HEK293 (cell line): ENCODE measurements at regions of chr4 and their contacts with region 1.

Region 1: DNA sequence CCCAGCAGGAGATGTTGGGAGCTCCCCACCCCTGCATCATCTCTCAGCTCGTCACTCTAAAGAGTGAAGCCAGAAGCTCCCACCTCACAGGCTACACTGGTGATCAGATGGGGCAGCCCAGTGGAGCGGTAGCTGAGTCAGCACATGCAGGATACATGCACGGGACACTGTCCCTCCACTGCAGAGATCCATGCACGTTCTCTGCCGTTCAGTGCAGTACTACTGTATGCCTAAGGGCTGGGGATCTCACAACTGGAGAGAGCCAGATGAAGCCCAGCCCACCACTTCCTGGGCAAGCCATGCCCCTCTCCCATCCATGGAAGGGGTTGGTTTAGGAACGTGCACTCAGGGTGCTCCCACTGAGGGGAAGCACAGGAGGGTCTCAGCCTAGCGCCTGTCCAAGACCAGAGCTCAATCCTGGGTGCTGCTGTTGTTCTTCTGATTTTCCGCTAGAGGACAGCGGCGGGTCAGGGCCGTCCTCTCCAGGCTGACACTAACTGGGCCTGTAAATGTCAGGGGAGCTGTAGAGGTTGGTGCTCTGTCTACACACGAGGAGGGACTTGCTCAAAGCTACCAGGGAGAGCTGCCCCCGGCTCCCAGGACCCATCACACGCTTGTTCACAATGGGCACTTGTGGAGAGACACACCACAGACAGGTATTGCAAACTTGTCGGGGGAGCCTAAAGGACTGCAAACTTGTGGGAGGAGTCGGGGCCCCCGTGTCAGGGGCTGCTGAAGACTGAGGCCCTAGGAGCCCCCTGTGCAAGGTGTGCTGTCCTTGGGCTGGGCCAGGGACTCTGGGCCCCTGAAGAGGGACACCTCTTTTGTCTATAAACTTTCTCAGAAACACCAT is 18.2 kb upstream of the ABLIM2 start:
- H3K4me3 ChIP-seq: no peak overlapping the region
- H3K27ac ChIP-seq: no peak overlapping the region
- H3K4me1 ChIP-seq: no peaks in the 10 kb centered on the region
- CTCF ChIP-seq: peak; percentile 59; the same call in 1 of the 2 replicates

Region 2: GRCh38 chr4:8000721-8001491 is 175.9 kb before region 1 on chr4:
- CTCF ChIA-PET with region 1: no interaction called
- POLR2A ChIA-PET with region 1: no interaction called
- H3K4me3 ChIP-seq: no peak overlapping the region
- H3K27ac ChIP-seq: no peak overlapping the region
- H3K4me1 ChIP-seq: no peaks in the 10 kb centered on the region
- CTCF ChIP-seq: no peak

Region 3: GRCh38 chr4:8079031-8079885 is 97.5 kb before region 1 on chr4:
- CTCF ChIA-PET with region 1: no interaction called
- POLR2A ChIA-PET with region 1: no interaction called
- H3K4me3 ChIP-seq: no peak overlapping the region
- H3K27ac ChIP-seq: no peak overlapping the region
- H3K4me1 ChIP-seq: no peaks in the 10 kb centered on the region
- CTCF ChIP-seq: no peak

Region 4: DNA sequence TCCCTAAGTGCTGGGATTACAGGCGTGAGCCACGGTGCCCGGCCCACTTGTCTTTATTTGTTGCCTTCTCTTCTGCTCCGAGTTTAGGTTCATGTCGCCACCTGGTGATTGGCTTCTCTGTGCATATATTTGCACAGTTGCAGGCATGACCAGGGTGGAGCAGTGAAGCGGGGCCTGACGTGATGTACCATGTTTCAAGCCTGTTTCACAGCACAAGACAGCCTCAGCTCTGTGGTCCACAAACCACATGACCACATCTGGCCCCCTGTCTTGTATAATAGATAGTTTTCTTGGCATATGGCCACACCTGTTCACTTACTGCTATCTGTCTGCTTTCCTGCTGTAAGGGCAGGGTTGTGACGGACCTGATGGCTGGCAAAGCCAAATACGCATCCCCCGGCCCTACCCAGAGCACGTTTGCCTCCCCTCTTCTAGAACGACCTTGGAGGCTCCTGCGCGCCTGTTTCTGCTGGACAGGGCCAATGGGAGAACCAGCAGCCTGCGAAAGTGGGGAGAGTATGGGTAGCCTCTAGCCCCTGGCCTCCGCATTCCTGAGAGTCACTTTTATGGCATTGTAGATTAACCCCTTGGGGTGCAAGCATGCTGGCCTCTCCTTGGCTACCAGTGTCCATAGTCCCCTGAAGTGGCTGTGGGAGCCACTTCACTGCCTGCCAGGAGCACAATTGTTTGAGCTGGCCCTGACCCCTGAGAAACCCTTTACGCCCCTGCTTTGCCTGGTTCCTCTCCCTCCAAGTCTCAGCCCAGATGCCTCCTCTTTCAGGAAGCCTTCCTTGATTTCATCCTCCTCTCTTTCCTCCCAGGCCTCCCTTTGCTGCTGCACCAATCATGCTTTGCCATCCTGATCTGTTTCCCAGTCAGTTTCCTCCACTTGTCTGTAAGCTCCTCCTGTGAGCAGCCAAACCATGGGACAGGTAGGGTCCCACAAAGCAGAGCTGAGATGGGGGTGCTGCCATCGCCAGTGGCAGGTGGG is 16.3 kb after region 1 on chr4:
- CTCF ChIA-PET with region 1: interaction called, 47 read pairs
- POLR2A ChIA-PET with region 1: interaction called, 3 read pairs
- H3K4me3 ChIP-seq: no peak overlapping the region
- H3K27ac ChIP-seq: no peak overlapping the region
- H3K4me1 ChIP-seq: no peaks in the 10 kb centered on the region
- CTCF ChIP-seq: peak; percentile 43

Region 5: GRCh38 chr4:8198906-8199593 is 22.3 kb after region 1 on chr4 and contains the start of gene SH3TC1:
- CTCF ChIA-PET with region 1: interaction called, 47 read pairs
- POLR2A ChIA-PET with region 1: interaction called, 3 read pairs
- H3K4me3 ChIP-seq: peak within 1 kb of the TSS; percentile 31
- H3K27ac ChIP-seq: no peak within 1 kb of the TSS
- H3K4me1 ChIP-seq: no peaks in the 10 kb centered on the region
- CTCF ChIP-seq: no peak

Region 6: DNA sequence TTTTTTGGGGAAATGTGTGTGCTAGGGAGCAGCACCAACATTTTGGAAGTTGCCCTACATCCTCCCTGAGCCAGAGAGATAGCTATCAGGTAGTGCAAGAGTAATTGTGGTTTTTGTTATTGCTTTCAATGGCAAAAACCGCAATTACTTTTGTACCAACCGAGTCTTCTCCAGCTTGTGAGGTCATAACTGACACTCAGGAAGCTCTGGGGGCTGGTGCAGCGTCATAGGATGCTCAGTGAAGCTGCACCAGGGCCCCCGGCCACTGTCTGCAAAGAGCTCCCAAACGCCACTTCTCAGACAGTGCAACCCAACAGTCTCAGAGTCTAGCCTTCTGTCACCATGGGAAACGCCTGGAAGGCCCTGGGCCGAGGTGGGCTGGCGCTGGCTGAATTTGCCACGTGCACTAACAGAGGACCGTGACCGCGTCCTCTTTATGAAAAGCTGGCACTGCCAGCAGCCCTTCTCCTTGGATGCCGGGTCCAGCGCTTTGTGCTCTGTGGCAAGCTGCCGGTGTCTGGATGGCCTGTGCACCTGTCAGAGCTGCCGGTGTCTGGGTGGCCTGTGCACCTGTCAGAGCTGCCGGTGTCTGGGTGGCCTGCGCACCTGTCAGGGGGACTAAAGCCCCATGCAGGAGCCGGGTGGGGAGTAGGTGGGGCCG is 41.7 kb after region 1 on chr4:
- CTCF ChIA-PET with region 1: interaction called, 11 read pairs
- POLR2A ChIA-PET with region 1: no interaction called
- H3K4me3 ChIP-seq: no peak overlapping the region
- H3K27ac ChIP-seq: no peak overlapping the region
- H3K4me1 ChIP-seq: no peaks in the 10 kb centered on the region
- CTCF ChIP-seq: no peak

Region 7: DNA sequence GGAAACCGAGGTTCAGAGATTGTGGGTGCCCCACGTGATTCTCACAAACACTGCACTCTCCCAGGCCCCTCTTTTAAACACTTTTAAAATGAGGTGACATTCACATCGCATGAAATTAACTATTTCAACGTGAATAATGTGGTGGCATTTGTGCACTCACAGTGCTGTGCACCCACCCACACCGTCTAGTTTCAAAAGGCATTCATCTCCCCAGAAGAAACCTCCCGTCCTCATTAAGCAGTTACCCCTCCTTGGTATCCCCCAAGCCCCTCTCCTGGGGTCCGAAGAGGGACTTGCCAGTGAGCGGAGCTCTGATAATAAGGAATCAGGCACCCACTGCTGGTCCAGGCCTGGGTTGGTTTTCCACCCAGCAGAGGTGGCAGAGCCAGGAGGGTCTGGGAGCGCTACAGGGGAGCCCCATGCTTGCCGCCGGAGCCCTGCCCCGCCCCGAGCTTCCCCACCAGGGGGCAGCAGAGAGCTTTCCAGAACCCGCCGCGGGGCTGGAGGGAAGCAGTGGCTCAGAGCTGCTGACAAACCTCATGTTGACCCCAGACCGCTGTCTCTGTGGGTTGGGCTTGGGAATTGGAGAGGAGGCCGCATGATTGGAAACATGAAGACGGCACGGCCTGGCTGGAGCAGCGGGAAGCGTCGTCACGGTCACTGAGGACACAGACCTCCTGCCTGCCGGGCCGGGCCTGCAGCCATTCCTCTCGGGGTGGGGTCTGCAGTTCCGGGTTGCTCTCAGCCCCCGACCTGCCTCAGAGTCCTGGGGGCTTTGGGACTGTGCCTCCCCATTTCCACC is 65.3 kb after region 1 on chr4:
- CTCF ChIA-PET with region 1: interaction called, 26 read pairs
- POLR2A ChIA-PET with region 1: no interaction called
- H3K4me3 ChIP-seq: no peak overlapping the region
- H3K27ac ChIP-seq: no peak overlapping the region
- H3K4me1 ChIP-seq: no peaks in the 10 kb centered on the region
- CTCF ChIP-seq: peak; percentile 70

Region 8: DNA sequence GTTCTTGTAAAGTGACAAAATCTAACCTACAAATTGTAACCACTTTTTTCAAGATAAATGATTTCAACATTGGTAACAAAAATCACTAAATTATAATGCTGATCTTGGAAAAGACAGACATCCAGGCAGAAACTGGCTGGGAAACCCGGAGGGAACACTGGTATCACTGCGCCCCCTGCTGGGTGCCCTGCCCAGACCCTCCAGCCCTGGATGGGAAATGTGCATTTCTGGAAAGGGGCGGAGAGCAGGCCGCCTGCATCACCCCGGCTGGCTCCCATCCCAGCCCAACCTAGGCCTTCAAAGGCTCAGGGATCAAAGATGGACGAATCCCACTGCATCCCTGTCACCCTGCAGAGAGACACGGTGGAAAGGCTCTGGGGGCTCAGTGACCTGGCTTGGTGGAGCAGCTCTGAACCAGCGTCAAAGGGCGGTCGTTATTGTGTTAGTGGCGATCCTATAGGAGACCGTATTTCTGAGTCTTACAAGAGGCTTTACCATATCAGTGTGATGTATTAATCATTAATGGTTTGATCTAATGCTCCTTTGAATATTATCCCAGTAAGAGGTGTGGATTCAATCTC is 226.5 kb after region 1 on chr4:
- CTCF ChIA-PET with region 1: interaction called, 24 read pairs
- POLR2A ChIA-PET with region 1: no interaction called
- H3K4me3 ChIP-seq: no peak overlapping the region
- H3K27ac ChIP-seq: no peak overlapping the region
- H3K4me1 ChIP-seq: no peaks in the 10 kb centered on the region
- CTCF ChIP-seq: peak; percentile 50